ENCODE measurements at regions of chr5 and their contacts with region 1.

Region 1: GRCh38 chr5:90932052-90932699 is 373.6 kb downstream of the ADGRV1 start:
- DNase-seq: peak; percentile 64
- CTCF ChIP-seq: peak; percentile 71

Region 2: GRCh38 chr5:90488791-90489190 is 443.4 kb before region 1 on chr5:
- in situ Hi-C with region 1: no loop called
- DNase-seq: no peak
- CTCF ChIP-seq: no peak

Region 3: GRCh38 chr5:90994796-90995195 is 62.6 kb after region 1 on chr5:
- in situ Hi-C with region 1: no loop called
- DNase-seq: no peak
- CTCF ChIP-seq: no peak

Region 4: DNA sequence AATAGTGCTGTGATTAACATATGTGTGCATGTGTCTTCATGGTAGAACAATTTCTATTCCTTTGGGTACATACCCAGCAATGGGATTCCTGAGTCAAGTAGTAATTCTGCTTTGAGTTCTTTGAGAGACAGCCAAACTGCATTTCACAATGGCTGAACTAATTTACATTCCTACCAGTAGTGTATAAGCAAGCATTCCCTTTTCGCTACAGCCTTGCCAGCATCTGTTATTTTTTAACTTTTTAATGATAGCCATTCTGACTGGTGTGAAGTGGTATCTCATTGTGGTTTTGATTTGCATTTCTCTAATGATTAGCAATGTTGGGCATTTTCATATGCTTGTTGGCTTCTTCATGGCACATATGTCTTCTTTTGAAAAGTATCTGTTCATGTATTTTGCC is 142.4 kb after region 1 on chr5:
- in situ Hi-C with region 1: loop called (anchors 25 kb)
- DNase-seq: no peak
- CTCF ChIP-seq: no peak

Region 5: DNA sequence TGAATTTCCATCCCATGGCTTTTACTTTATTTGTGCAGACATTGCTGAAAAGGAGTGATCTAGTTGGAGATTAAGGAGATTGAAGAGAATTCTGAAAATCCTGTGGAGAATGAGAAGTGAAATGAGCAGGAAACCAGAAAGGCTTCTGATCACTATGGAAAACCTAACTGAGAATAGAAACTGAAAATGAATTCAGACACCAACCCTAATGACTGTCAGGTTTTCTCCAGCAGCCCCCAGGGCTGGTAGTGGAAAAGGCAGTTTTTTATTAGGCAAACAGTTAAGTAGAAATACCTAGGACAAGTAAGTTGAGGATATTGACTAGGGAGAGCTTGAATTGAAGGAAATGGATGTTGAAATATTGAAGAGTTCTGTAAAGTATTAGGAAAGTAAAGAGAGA is 465.6 kb after region 1 on chr5:
- in situ Hi-C with region 1: loop called (anchors 10 kb)
- DNase-seq: no peak
- CTCF ChIP-seq: no peak